GM18951 (cell line): ENCODE measurements at regions of chr4 and their contacts with region 1.

Region 1: GRCh38 chr4:145557720-145558119 is 61.5 kb upstream of the MMAA start:
- POLR2A ChIP-seq: no peak

Region 2: DNA sequence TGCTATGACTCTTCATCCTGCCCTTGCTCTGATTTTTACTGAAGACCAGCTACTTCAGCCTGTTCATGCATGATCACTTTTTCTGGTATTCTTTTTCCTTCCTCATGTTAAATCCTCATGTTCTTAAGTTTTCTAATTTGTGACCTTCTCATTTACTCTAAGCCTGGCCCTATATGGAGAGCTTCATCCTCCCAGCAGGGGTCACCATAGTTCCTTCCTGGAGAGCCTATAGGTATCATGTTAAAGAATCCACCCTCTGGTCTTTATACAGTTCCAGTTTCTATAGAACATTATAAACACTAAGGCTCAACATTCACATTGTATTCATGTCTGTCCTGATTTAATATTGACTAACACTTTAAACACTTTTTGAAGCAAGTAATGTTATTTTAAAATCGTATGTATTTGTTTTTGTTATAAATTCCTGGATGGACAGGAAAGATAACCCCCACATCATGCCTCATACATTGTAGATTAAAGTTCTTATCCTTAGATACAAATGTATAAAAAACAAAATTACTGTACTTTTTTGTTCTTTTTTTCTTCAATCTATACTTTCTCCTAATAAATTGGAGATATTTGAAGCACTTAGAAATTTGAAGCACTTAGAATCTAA is 323.5 kb before region 1 on chr4:
- in situ Hi-C with region 1: loop called (anchors 25 kb)
- POLR2A ChIP-seq: no peak

Region 3: DNA sequence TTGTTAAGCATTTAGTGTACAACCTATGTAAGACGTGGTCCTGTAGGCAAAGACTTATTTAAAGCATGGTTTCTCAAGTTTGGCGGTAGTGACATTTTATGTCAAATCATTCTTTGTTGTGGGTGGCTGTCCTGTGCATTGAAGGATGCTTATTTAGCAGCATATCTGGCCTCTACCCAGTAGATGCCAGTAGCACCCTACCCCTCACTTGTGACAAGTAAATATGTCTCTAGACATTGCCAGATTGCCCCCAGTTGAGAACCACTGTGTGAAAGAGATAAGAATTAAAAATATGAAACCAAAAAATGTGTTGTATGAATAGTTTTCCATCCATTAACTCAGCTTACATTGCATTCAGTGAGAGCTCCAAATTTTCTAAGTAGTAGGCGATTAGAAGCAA is 87.0 kb after region 1 on chr4:
- in situ Hi-C with region 1: no loop called
- POLR2A ChIP-seq: no peak